Mucosa of descending colon (tissue), 3 donors: ENCODE measurements at regions of chr11 and their contacts with region 1.

Region 1: GRCh38 chr11:96207459-96208449 is 135.2 kb downstream of the MAML2 start:
- DNase-seq: peak in 2 of 3 donors; percentile 45 to 55
- ATAC-seq: peak; percentile 93
- H3K4me3 ChIP-seq: no peak overlapping the region
- H3K4me1 ChIP-seq: peaks cover 22% of the 10 kb centered on the region
- CTCF ChIP-seq: no peak

Region 2: DNA sequence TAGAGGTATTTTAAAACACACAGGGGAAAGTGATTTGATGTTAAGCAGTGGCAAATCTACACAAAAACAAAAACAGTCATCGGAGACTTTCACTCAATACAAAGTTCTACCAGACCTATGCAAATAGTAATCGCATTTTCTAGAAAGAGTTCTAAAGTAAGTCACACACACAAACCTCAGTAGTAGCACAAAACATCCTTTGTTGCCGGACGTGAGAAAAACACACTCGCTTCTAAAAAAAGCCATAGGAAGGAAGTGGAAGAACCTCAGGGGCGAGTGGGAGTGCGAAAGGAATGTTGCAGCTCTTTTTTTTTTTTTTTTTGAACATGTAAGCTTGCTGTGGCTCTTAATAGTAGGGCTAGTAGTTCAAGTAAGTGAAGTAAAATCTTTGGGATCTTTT is 46.3 kb after region 1 on chr11:
- intact Hi-C with region 1: loop called in 1 of 2 experiments (anchors 10 kb)
- DNase-seq: no peak
- ATAC-seq: peak; percentile 37
- H3K4me3 ChIP-seq: no peak overlapping the region
- H3K4me1 ChIP-seq: peaks cover 34% of the 10 kb centered on the region
- CTCF ChIP-seq: no peak